ENCODE measurements at regions of chr6 and their contacts with region 1.

Region 1: DNA sequence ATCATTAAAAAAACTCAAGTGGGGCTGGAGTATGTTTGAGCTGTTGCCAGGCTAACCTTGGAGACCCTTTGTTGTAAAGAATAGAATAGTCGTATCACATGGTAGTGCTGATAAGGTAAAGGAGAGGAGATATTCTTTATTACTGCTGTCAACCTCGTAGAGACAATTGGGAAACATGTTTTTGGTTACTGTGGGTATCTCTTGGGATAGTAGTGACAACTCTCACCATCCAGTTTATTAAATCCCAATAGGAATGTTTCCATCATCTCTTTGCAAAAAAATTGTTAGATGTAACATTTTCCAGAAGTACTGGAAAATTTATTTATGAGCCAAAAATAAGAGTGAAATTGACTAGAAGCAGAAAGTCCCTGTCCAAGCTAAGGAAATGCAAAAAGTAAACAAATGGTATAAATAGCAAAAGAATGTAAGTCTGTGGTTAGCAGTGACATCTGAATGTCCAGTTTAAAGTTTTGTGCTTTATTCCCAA is 829.3 kb upstream of the CITED2 start:
- DNase-seq: peak; percentile 41
- ATAC-seq: peak; percentile 69
- H3K4me3 ChIP-seq: no peak overlapping the region
- H3K27ac ChIP-seq: 0 out of 2 replicates have a peak overlapping the region, but pooled peaks have one; percentile 18
- H3K4me1 ChIP-seq: peaks cover 21% of the 10 kb centered on the region
- H3K27me3 ChIP-seq: no peaks in the 10 kb centered on the region
- CTCF ChIP-seq: no peak

Region 2: GRCh38 chr6:140174515-140174914 is 29.2 kb before region 1 on chr6:
- CTCF ChIA-PET with region 1: no interaction called
- POLR2A ChIA-PET with region 1: no interaction called
- intact Hi-C with region 1: loop called (anchors 1 kb)
- DNase-seq: peak; percentile 97
- ATAC-seq: peak; percentile 93
- H3K4me3 ChIP-seq: peak overlapping the region; percentile 46; the same call in 1 of the 2 replicates
- H3K27ac ChIP-seq: peak overlapping the region; percentile 80
- H3K4me1 ChIP-seq: peaks cover 24% of the 10 kb centered on the region
- H3K27me3 ChIP-seq: no peaks in the 10 kb centered on the region
- CTCF ChIP-seq: no peak